ENCODE measurements at regions of chr1 and their contacts with region 1.

Region 1: DNA sequence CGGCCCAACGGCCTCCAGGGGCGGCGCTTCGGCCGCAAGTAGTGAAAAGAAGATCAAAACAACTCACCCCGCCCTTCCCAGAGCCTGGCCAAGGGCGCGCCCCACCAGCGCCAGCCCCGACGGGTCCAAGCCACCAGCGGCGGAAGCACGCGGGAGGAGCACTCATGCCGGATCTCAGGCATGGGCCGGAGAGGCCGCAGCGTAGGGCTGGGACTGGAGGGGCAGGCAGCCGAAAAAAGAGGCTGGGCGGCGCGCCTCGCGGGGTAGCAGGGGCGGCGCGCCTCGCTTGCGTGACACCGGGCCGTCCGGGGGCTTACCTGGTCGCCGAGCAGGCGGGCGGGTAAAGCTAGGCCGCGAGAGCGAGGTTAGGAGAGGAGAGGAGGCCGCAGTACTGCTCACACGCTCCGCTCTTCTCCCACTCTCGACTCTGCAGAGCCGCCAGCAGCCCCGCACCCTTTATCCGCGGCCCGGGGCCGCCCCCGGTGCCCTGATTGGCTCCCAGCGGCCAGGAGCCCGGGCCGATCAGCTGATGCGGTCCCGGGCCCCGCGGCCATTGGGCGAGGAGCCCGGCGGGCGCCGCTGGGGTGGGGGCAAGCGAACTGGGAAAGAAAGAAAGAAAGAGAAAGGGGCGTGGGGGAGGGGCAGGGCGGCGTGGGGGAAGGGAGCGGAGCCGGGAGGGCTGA is at the start of gene GLUL:
- DNase-seq: peak; percentile 86
- ATAC-seq: peak; percentile 94
- H3K4me3 ChIP-seq: peak within 1 kb of the TSS; percentile 94 to 98 (median 97)
- H3K27ac ChIP-seq: peak within 1 kb of the TSS; percentile 94
- H3K4me1 ChIP-seq: peaks cover 56% of the 10 kb centered on the region
- H3K27me3 ChIP-seq: no peaks in the 10 kb centered on the region; a peak in 1 of 5 replicates
- CTCF ChIP-seq: 0 out of 2 replicates have a peak, but pooled peaks have one; percentile 1
- EP300 ChIP-seq: no peak; a peak in 2 of 4 replicates
- POLR2A ChIP-seq: peak; percentile 99 to 100
- RAD21 ChIP-seq: peak; percentile 66
- total RNA-seq, gene GLUL: 827 and 909 TPM in 2 replicates

Region 2: GRCh38 chr1:182143154-182143657 is 248.3 kb before region 1 on chr1:
- CTCF ChIA-PET with region 1: interaction called, 70 read pairs
- POLR2A ChIA-PET with region 1: interaction called, 48 read pairs
- in situ Hi-C with region 1: loop called (anchors 5 kb)
- intact Hi-C with region 1: loop called (anchors 1 kb)
- DNase-seq: peak; percentile 71
- ATAC-seq: peak; percentile 90
- H3K4me3 ChIP-seq: peak overlapping the region in 1 of 3 experiments; percentile 30; a peak in 2 of 6 replicates
- H3K27ac ChIP-seq: no peak overlapping the region
- H3K4me1 ChIP-seq: peaks cover 51% of the 10 kb centered on the region
- H3K27me3 ChIP-seq: no peaks in the 10 kb centered on the region
- CTCF ChIP-seq: peak; percentile 95
- EP300 ChIP-seq: no peak
- POLR2A ChIP-seq: no peak
- RAD21 ChIP-seq: peak; percentile 92

Region 3: DNA sequence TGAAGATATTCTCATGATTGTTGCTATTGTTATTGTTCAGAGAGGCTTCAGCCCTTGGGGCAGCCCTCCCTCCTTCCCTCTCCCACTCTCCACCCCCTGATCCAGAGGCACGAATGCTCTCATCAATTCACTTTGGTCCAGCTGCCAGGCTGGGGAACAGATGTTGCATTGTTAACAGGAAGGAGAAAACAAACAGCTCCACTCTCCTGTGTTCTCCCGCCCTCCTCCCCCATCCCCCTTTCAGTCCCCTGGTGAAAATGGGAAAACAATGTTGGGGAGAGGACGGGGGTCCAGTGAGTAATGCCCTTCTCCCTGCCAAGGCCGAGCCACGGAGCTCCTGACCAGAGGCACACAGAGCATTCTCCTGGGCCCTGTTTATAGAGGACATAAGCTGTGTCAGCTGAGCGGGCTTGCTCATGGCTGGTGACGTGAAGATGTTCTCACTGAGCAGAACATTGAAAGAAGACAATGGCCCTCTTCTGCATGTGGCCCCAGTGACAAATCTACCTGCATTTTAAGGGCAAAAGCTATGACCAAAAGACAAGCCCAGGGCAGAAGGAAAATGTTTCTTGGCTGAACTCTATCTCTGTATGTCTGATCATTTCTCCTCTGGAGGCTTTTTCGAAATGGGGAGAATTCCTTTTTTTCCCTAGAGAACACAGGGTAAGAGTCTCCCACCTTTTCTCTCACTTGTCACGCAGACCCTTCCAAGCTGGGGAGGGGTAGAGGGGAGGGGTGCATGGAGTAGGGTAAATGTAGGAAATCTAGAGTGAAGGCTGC is 111.6 kb before region 1 on chr1:
- CTCF ChIA-PET with region 1: no interaction called
- POLR2A ChIA-PET with region 1: interaction called, 12 read pairs
- in situ Hi-C with region 1: no loop called
- intact Hi-C with region 1: no loop called
- DNase-seq: peak; percentile 91
- ATAC-seq: peak; percentile 97
- H3K4me3 ChIP-seq: 0 out of 6 replicates have a peak overlapping the region, but pooled peaks of 1 of the 3 experiments have one; percentile 5
- H3K27ac ChIP-seq: peak overlapping the region; percentile 75
- H3K4me1 ChIP-seq: peaks cover 66% of the 10 kb centered on the region
- H3K27me3 ChIP-seq: no peaks in the 10 kb centered on the region
- CTCF ChIP-seq: no peak
- EP300 ChIP-seq: no peak; a peak in 2 of 4 replicates
- POLR2A ChIP-seq: no peak
- RAD21 ChIP-seq: no peak

Region 4: DNA sequence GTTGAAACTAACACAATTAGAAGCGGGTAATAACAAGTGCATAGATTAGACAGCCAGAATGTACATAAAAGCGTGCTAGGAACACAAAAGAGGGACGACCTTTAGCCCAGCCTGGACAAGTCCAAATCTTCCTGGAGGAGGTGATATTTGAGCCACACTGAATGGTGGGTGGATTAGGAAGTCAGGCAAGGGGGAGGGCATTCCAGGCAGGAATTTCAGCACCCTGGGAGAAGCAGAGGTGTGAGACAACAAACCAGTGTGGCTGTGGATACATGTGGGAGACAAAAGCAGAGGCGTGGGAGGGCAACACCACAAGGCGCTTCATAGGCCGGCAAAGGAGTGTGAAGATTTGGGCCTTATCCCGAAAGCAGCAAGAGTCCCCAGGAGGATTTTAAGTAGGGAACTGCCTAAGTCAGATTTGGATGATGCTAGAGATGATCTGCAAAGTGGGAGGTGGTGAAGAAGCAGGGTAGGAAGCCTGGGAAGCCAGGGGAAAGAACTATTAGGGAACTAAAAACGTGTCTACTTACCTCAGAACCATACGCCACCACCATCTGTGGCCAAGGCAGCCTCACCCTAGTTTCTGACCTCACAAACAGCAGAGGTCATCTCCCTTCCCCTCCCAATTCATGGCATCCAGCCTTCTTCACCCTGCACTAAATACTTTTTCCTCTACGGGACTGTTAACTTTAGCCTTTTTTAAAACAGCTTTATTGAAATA is 81.7 kb before region 1 on chr1:
- CTCF ChIA-PET with region 1: no interaction called
- POLR2A ChIA-PET with region 1: interaction called, 11 read pairs
- in situ Hi-C with region 1: loop called (anchors 5 kb)
- intact Hi-C with region 1: no loop called
- DNase-seq: peak; percentile 81
- ATAC-seq: peak; percentile 99
- H3K4me3 ChIP-seq: peak overlapping the region in 1 of 3 experiments; percentile 38; a peak in 2 of 6 replicates
- H3K27ac ChIP-seq: peak overlapping the region; percentile 62
- H3K4me1 ChIP-seq: peaks cover 36% of the 10 kb centered on the region
- H3K27me3 ChIP-seq: no peaks in the 10 kb centered on the region
- CTCF ChIP-seq: no peak; the same call in 1 of the 2 replicates
- EP300 ChIP-seq: peak in 1 of 2 experiments; percentile 77; a peak in 2 of 4 replicates
- POLR2A ChIP-seq: 0 out of 4 replicates have a peak, but pooled peaks of 1 of the 2 experiments have one; percentile 29
- RAD21 ChIP-seq: peak; percentile 40; the same call in 1 of the 2 replicates

Region 5: GRCh38 chr1:182340233-182340926 is 51.1 kb before region 1 on chr1:
- CTCF ChIA-PET with region 1: no interaction called
- POLR2A ChIA-PET with region 1: interaction called, 12 read pairs
- in situ Hi-C with region 1: no loop called
- intact Hi-C with region 1: no loop called
- DNase-seq: peak; percentile 37
- ATAC-seq: peak; percentile 81
- H3K4me3 ChIP-seq: peak overlapping the region; percentile 25 to 68 (median 38)
- H3K27ac ChIP-seq: no peak overlapping the region
- H3K4me1 ChIP-seq: peaks cover 56% of the 10 kb centered on the region
- H3K27me3 ChIP-seq: no peaks in the 10 kb centered on the region; a peak in 1 of 5 replicates
- CTCF ChIP-seq: no peak
- EP300 ChIP-seq: no peak
- POLR2A ChIP-seq: no peak
- RAD21 ChIP-seq: no peak

Region 6: DNA sequence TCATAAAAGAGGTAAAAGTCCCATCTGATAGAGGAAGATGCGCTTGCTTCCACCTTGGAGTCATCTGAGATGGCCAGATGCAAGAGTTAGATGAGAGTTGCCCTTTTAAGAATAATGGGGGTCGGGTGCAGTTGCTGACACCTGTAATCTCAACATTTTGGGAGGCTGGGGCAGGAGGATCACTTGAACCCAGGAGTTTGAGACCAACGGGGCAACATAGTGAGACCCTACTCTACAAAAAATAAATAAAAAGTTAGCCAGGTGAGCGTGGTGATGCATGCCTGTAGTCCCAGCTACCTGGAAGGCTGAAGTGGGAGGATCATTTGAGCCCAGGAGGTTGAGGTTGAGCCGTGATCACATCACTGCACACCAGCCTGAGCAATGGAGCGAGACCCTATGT is 22.5 kb after region 1 on chr1:
- CTCF ChIA-PET with region 1: no interaction called
- POLR2A ChIA-PET with region 1: no interaction called
- in situ Hi-C with region 1: no loop called
- intact Hi-C with region 1: no loop called
- DNase-seq: no peak
- ATAC-seq: no peak
- H3K4me3 ChIP-seq: no peak overlapping the region
- H3K27ac ChIP-seq: no peak overlapping the region
- H3K4me1 ChIP-seq: peaks cover 2% of the 10 kb centered on the region
- H3K27me3 ChIP-seq: peaks cover 0 to 5% of the 10 kb centered on the region in 2 experiments; a peak in 1 of 5 replicates
- CTCF ChIP-seq: no peak
- EP300 ChIP-seq: no peak
- POLR2A ChIP-seq: no peak
- RAD21 ChIP-seq: no peak

Region 7: DNA sequence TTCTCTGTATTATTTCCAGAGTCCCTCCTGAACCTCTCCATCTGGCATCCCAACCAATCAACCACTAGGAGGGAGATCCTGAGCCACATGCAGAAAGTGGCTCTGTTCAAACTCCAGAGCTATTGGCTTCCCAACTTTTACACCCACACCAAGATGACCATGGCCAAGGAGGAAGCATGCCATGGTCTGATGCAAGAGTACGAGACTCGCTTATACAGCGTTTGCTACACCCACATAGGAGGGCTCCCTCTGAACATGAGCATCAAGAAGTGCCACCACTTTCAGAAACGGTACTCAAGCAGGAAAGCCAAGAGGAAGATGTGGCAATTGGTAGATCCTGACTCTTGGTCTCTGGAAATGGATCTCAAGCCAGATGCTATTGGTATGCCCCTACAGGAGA is 82.1 kb after region 1 on chr1:
- CTCF ChIA-PET with region 1: no interaction called
- POLR2A ChIA-PET with region 1: no interaction called
- in situ Hi-C with region 1: no loop called
- intact Hi-C with region 1: no loop called
- DNase-seq: no peak
- ATAC-seq: no peak
- H3K4me3 ChIP-seq: no peak overlapping the region
- H3K27ac ChIP-seq: no peak overlapping the region
- H3K4me1 ChIP-seq: no peaks in the 10 kb centered on the region
- H3K27me3 ChIP-seq: peaks cover 0 to 21% of the 10 kb centered on the region in 2 experiments; a peak in 3 of 5 replicates
- CTCF ChIP-seq: no peak
- EP300 ChIP-seq: no peak
- POLR2A ChIP-seq: no peak
- RAD21 ChIP-seq: no peak

Region 8: DNA sequence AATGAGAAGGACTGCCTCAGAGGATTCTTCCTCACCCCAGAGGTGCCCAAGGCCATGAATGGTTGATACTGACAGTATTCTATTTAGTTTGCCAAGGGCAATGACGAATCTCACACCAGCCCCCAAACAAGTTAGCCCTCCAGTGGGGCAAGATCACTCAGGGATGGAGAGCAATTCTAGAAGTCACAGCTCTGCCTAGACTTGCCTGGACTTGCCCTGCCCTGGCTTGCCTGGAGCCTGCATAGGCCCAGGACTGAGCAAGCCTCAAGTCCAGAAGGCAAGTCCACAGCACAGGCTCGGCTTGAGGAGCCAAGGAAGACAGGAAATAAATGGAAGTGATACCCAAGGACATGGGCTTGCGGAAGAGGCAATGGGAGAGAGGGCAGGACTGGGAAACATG is 252.2 kb after region 1 on chr1:
- CTCF ChIA-PET with region 1: no interaction called
- POLR2A ChIA-PET with region 1: no interaction called
- in situ Hi-C with region 1: no loop called
- intact Hi-C with region 1: no loop called
- DNase-seq: no peak
- ATAC-seq: no peak
- H3K4me3 ChIP-seq: no peak overlapping the region
- H3K27ac ChIP-seq: no peak overlapping the region
- H3K4me1 ChIP-seq: no peaks in the 10 kb centered on the region
- H3K27me3 ChIP-seq: peaks cover 0 to 3% of the 10 kb centered on the region in 2 experiments; a peak in 1 of 5 replicates
- CTCF ChIP-seq: no peak
- EP300 ChIP-seq: no peak
- POLR2A ChIP-seq: no peak
- RAD21 ChIP-seq: no peak

Measured in HepG2 (cell line).